Astrocyte of the cerebellum (primary cell): ENCODE measurements at regions of chr11 and their contacts with region 1.

Region 1: GRCh38 chr11:94283678-94284077 is 20.7 kb upstream of the IZUMO1R start:
- DNase-seq: no peak
- H3K4me3 ChIP-seq: no peak overlapping the region
- CTCF ChIP-seq: no peak

Region 2: GRCh38 chr11:94219771-94220170 is 63.9 kb before region 1 on chr11:
- in situ Hi-C with region 1: loop called (anchors 5 kb)
- DNase-seq: no peak
- H3K4me3 ChIP-seq: no peak overlapping the region
- CTCF ChIP-seq: no peak